Dendritic cell treated with granulocyte-macrophage colony-stimulating factor and Interleukin-4, amounts not matched to agents 40 ng/mL and 50 ng/mL, for 4 days (primary cell): ENCODE measurements at regions of chr6 and their contacts with region 1.

Region 1: GRCh38 chr6:37169496-37170272 is at the start of gene PIM1:
- H3K4me3 Mint-ChIP-seq: peak within 1 kb of the TSS; percentile 84
- H3K27ac Mint-ChIP-seq: peak within 1 kb of the TSS; percentile 94
- H3K4me1 Mint-ChIP-seq: peaks cover 47% of the 10 kb centered on the region
- H3K27me3 Mint-ChIP-seq: peaks cover 6% of the 10 kb centered on the region

Region 2: GRCh38 chr6:36885461-36886401 is 284.0 kb before region 1 on chr6 and contains the start of gene C6orf89:
- intact Hi-C with region 1: loop called (anchors 5 kb)
- H3K4me3 Mint-ChIP-seq: peak within 1 kb of the TSS; percentile 83
- H3K27ac Mint-ChIP-seq: peak within 1 kb of the TSS; percentile 83
- H3K4me1 Mint-ChIP-seq: peaks cover 28% of the 10 kb centered on the region
- H3K27me3 Mint-ChIP-seq: no peaks in the 10 kb centered on the region

Region 3: DNA sequence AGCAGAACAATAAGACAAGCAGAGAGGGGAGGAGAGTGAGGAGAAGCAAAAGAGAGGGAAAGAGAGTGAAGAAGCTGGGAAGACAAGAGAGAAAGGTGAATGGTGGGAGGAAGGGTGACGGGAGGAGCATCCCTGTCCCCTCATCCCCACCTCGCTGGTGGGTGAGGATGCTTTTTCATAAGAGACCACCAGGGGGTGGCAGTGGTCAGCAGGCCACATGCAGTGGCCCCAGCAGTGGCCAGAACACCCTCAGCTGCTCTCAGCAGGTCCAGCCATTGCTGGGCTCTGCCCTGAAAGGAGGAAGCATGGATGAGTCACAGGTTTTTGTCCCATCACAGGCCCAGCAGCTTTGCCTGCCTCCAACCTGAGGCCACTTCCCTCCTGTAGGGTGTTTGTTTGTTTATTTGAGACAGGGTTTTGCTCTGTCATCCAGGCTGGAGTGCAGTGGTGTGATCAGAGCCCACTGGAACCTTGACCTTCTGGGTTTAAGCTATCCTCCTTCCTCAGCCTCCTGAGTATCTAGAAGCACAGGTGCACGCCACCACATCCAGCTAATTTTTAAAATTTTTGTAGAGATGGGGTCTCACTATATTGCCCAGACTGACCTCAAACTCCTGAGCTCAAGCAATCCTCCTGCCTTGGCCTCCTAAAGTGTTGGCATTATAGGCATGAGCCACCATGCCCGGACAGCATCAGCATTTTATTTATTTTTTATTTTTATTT is 140.3 kb before region 1 on chr6:
- intact Hi-C with region 1: loop called (anchors 1 kb)
- H3K4me3 Mint-ChIP-seq: no peak overlapping the region
- H3K27ac Mint-ChIP-seq: peak overlapping the region; percentile 71
- H3K4me1 Mint-ChIP-seq: peaks cover 81% of the 10 kb centered on the region
- H3K27me3 Mint-ChIP-seq: no peaks in the 10 kb centered on the region

Region 4: DNA sequence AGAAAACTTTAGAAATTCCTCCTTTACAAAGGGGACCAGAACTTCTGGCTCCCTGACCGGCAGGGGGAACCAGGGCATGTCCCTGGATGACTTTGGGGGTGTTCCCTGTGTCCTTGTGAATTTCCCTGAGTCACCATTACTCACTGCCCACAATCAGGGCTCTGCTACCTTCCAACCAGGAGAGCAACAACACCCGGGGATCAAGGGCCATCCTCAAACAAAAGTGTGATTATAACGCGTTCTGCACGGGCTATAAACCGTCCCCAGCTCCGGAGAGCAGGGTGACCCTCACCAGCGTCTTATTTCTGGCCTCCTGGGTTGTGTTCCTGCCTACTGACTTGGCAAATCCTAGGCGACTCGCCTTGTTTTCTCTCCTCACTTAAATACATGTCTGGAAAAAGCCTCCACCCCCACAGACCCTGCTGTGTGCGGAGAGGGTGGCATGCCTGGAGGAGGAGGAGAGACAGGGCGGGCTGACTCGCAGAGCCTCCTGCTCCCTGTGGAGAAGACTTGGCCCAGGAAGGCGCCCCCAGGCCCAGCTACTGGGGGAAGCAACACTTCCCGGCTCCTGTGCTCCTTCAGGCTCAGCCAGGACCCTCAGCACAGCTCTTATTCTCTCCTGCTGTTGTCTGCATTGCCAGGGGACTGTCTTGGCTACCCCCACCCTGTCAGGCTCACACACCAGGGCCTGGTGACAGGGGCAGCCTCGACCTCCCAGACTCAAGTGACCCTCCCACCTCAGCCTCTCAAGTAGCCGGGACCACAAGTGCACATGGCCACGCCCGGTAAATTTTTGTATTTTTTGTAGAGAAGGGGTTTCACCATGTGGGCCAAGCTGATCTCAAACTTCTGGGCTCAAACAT is 110.1 kb before region 1 on chr6:
- intact Hi-C with region 1: loop called (anchors 2 kb)
- H3K4me3 Mint-ChIP-seq: no peak overlapping the region
- H3K27ac Mint-ChIP-seq: peak overlapping the region; percentile 81
- H3K4me1 Mint-ChIP-seq: peaks cover 46% of the 10 kb centered on the region
- H3K27me3 Mint-ChIP-seq: peaks cover 9% of the 10 kb centered on the region

Region 5: DNA sequence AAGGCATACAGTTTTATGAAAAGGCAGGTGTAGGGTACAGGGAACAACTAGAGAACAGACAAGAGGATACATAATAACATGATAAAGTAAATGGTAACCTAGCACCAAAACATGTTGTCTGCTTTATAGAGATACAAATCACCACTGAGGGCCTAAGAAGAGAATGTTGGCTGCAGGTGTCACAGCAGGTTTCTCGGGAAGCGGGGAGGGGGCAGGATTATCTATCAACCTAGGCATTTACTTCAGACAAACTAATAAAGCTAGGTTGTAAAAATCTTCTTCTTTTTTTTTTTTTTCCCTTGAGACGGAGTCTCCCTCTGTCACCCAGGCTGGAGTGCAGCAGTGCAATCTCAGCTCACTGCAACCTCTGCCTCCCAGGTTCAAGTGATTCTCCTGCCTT is 23.0 kb after region 1 on chr6:
- intact Hi-C with region 1: no loop called
- H3K4me3 Mint-ChIP-seq: no peak overlapping the region
- H3K27ac Mint-ChIP-seq: peak overlapping the region; percentile 39
- H3K4me1 Mint-ChIP-seq: peaks cover 21% of the 10 kb centered on the region
- H3K27me3 Mint-ChIP-seq: no peaks in the 10 kb centered on the region

Region 6: GRCh38 chr6:37207903-37208456 is 38.3 kb after region 1 on chr6:
- intact Hi-C with region 1: loop called (anchors 1 kb)
- H3K4me3 Mint-ChIP-seq: no peak overlapping the region
- H3K27ac Mint-ChIP-seq: peak overlapping the region; percentile 3
- H3K4me1 Mint-ChIP-seq: peaks cover 67% of the 10 kb centered on the region
- H3K27me3 Mint-ChIP-seq: peaks cover 10% of the 10 kb centered on the region

Region 7: GRCh38 chr6:37222125-37222967 is 52.7 kb after region 1 on chr6:
- intact Hi-C with region 1: no loop called
- H3K4me3 Mint-ChIP-seq: peak overlapping the region; percentile 67
- H3K27ac Mint-ChIP-seq: peak overlapping the region; percentile 6
- H3K4me1 Mint-ChIP-seq: peaks cover 41% of the 10 kb centered on the region
- H3K27me3 Mint-ChIP-seq: peaks cover 3% of the 10 kb centered on the region

Region 8: GRCh38 chr6:37257634-37258404 is 88.1 kb after region 1 on chr6 and contains the starts of genes TBC1D22B and TMEM217:
- intact Hi-C with region 1: no loop called
- H3K4me3 Mint-ChIP-seq: peak within 1 kb of the TSS; percentile 93
- H3K27ac Mint-ChIP-seq: peak within 1 kb of the TSS; percentile 96
- H3K4me1 Mint-ChIP-seq: peaks cover 38% of the 10 kb centered on the region
- H3K27me3 Mint-ChIP-seq: peaks cover 3% of the 10 kb centered on the region

Region 9: DNA sequence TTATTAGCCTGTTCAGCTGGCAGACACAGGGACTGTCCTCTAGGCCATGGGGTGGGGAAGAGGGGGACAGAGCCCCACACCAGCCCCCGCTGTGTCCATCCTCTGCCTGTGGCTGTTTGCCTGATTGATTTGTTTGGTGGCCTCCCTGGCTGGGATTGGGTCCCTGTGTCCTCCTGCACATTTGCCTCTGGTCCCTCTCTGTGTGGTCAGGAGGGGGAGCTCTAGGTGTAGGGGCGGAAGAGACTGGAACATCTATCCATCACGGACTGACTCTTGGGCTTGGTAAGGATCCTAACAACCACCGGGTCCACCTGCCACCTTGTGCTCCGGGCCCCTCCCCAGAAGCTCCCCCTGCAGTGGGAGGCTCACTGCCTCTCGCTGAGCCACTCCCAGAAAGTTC is 368.4 kb after region 1 on chr6:
- intact Hi-C with region 1: no loop called
- H3K4me3 Mint-ChIP-seq: no peak overlapping the region
- H3K27ac Mint-ChIP-seq: no peak overlapping the region
- H3K4me1 Mint-ChIP-seq: no peaks in the 10 kb centered on the region
- H3K27me3 Mint-ChIP-seq: peaks cover 68% of the 10 kb centered on the region